Activated naive CD4-positive, alpha-beta T cell treated with anti-CD3 and anti-CD28 coated beads for 36 hours (primary cell): ENCODE measurements at regions of chr18 and their contacts with region 1.

Region 1: DNA sequence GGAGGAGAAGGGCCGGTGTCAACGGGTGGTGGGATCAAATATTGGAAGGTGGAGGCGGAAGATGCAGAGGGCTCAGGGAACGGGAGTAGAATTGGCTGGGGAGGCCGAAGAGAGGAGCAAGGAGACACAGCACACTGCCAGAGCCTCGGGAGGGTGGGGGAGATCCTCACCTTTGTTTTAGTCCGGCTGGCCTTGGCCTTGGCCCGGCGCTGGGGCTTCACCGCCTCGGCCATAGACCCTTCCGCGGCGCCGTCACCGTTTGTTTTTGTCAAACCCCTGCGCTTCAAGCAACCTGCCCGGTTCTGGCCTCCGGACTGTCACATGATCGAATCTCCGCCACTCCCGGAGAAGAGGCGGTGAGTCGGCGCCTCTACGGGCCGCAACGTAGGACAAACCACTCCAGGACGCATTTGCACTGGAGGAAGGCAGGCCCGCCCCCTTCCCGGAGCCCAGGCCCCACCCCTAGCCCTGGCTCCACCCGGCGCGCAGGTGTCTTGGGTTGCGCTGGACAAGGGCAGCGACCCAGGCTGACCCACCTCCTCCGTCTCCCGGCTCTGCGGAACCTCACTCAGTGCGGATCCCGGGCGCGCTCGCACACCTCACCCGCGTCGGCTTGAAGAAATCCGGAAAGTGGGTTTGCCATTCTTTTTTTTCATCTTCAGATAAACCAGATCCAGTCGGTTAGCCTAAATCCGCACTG is at the start of gene EPG5:
- DNase-seq: peak; percentile 98
- H3K4me3 Mint-ChIP-seq: peak within 1 kb of the TSS; percentile 97
- H3K27ac Mint-ChIP-seq: peak within 1 kb of the TSS; percentile 86
- H3K4me1 Mint-ChIP-seq: peaks cover 33% of the 10 kb centered on the region
- H3K27me3 Mint-ChIP-seq: no peaks in the 10 kb centered on the region
- total RNA-seq, gene EPG5: 18.3 to 21.2 TPM

Region 2: GRCh38 chr18:45935591-45936335 is 31.4 kb before region 1 on chr18:
- CTCF ChIA-PET with region 1: no interaction called
- intact Hi-C with region 1: loop called (anchors 2 kb)
- DNase-seq: peak; percentile 7
- H3K4me3 Mint-ChIP-seq: no peak overlapping the region
- H3K27ac Mint-ChIP-seq: no peak overlapping the region
- H3K4me1 Mint-ChIP-seq: peaks cover 33% of the 10 kb centered on the region
- H3K27me3 Mint-ChIP-seq: no peaks in the 10 kb centered on the region

Region 3: GRCh38 chr18:46028536-46028891 is 61.4 kb after region 1 on chr18:
- CTCF ChIA-PET with region 1: no interaction called
- intact Hi-C with region 1: loop called (anchors 1 kb)
- DNase-seq: no peak
- H3K4me3 Mint-ChIP-seq: peak overlapping the region; percentile 81
- H3K27ac Mint-ChIP-seq: peak overlapping the region; percentile 78
- H3K4me1 Mint-ChIP-seq: peaks cover 14% of the 10 kb centered on the region
- H3K27me3 Mint-ChIP-seq: peaks cover 6% of the 10 kb centered on the region

Region 4: DNA sequence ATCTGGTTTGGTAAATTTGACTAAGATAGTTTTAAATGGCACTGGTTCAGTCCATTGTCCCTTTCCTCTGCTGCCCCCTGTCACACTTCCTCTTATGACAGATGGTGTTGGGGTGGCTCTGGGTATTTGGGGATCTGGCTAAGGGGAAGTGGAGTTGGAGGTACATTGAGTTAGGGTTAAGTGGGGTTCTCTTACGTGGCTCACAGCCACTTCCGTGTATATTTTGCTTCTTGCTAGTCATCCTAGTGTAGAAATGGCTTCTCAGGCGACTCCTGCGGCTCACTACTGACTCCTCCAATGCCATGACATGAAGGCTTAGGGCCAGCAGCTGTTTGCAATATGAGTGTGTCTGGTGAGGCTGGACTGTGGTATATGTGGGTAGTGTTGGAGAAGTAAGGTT is 324.0 kb after region 1 on chr18:
- CTCF ChIA-PET with region 1: no interaction called
- intact Hi-C with region 1: no loop called
- DNase-seq: peak; percentile 15
- H3K4me3 Mint-ChIP-seq: no peak overlapping the region
- H3K27ac Mint-ChIP-seq: no peak overlapping the region
- H3K4me1 Mint-ChIP-seq: no peaks in the 10 kb centered on the region
- H3K27me3 Mint-ChIP-seq: no peaks in the 10 kb centered on the region

Region 5: DNA sequence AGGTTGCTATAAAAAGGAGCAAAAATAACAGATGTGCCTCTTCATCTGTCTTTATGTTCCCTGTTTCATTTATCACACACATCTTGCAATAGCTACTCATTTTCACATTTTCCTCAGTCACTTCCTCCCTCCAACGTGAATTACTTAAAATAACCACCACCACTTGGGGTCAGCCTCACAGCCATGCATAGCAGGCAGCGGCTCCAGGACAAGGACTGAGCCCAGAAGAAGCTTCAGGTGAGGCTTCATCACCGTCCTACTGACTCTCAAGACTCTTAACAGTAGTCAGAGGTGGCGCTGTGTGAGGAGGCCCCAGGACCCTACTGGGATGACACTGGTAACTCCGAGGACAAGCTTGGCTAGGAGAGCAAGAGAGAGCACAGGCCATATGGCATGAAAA is 805.2 kb after region 1 on chr18:
- CTCF ChIA-PET with region 1: no interaction called
- intact Hi-C with region 1: no loop called
- DNase-seq: no peak
- H3K4me3 Mint-ChIP-seq: no peak overlapping the region
- H3K27ac Mint-ChIP-seq: no peak overlapping the region
- H3K4me1 Mint-ChIP-seq: no peaks in the 10 kb centered on the region
- H3K27me3 Mint-ChIP-seq: no peaks in the 10 kb centered on the region